Head of caudate nucleus (tissue), 42 donors: ENCODE measurements at regions of chr9 and their contacts with region 1.

Region 1: DNA sequence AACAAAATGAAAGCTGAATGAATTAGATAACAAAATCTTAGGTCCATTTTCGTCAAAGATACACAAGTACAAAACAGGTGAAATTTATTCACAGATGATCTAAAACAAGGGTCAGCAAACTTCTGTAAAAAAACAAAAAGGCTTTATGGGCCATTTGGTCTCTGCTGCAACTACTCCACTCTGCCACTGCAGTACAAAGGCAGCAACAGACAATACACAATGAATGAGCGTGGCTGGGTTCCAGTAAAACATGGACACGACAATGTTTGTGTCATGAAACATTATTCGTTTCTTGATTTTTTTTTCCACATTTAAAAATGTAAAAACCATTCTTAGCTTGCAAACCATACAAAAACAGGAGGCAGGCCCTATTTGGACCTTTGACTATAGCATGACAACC is 71.9 kb downstream of the ECPAS start:
- DNase-seq: peak in 40 of 42 donors; percentile 14 to 93 (median 77)

Region 2: DNA sequence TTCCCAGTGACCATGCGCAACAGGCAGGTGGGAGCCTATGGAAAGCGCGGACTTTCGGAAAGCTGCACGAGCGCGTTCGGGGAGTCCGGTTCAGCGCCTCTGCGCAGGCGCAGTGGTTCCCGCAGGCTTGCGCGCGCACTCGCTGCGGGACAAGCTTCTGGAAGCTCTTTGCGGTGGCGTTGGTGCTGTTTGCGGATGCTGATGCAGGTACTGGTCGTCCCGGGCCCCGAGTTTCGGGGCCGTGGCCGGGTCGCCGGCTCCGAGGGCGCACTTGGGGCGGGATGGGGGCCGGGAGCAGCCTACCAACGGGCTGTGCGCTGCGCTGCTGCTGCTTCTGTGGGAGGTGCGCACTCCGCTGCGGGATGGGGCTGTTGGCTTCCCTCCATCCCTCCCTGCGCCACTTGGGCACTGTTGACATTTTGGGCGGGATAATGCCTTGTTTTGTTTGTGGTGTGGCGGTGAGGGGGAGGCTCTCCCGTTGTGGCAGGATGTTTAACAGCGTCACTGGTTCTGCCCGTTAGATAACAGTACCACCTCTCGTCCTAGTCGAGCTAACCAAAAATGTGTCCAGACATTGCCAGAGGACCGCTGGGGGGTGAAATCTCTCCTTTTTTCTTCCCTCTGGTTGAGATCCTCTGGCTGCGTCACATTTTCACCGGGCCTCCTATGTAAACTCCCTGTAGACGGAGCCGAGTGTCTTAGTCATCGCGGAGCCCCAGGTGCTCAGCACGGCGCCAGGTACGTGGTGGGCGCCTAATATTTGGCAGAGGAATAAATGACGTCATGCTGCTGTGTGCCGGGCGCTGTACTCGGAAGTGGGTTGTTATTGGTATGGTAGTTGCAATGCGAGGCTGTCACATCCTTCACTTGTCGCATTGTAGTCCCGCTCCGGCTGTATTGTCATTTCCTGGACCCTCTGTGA is 113.0 kb after region 1 on chr9 and contains the start of gene ZNF483:
- intact Hi-C with region 1: loop called (anchors 10 kb)
- DNase-seq: peak; percentile 68 to 95 (median 88)